CD14-positive monocyte (primary cell): ENCODE measurements at regions of chr12 and their contacts with region 1.

Region 1: DNA sequence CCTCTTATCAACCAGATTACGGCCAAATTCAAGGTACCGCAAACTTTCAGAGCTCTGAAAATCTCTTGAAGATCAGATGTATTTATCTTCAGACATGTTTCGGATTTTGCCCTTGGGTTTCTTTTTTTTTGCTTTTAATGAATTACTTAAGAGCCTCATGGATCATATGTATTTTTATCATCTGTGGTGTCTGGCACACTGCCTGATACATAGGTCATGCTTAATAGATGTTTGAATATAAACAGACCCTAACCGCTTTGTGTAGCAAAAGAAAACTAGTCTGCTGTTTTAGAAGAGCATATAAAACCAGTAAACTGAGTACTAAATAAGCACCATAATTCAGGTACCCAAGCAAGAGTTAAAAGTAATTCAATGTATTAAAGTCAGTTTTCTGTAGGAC is 20.1 kb upstream of the TBK1 start:
- DNase-seq: no peak
- H3K4me3 ChIP-seq: no peak overlapping the region
- H3K4me3 Mint-ChIP-seq: no peak overlapping the region
- H3K27ac ChIP-seq: no peak overlapping the region
- H3K27ac Mint-ChIP-seq: no peak overlapping the region
- H3K4me1 ChIP-seq: no peaks in the 10 kb centered on the region
- H3K4me1 Mint-ChIP-seq: no peaks in the 10 kb centered on the region
- H3K27me3 ChIP-seq: no peaks in the 10 kb centered on the region
- H3K27me3 Mint-ChIP-seq: no peaks in the 10 kb centered on the region
- CTCF ChIP-seq: no peak

Region 2: GRCh38 chr12:64373193-64373592 is 58.6 kb before region 1 on chr12:
- intact Hi-C with region 1: no loop called
- DNase-seq: no peak
- H3K4me3 ChIP-seq: no peak overlapping the region
- H3K4me3 Mint-ChIP-seq: no peak overlapping the region
- H3K27ac ChIP-seq: no peak overlapping the region
- H3K27ac Mint-ChIP-seq: no peak overlapping the region
- H3K4me1 ChIP-seq: no peaks in the 10 kb centered on the region
- H3K4me1 Mint-ChIP-seq: no peaks in the 10 kb centered on the region
- H3K27me3 ChIP-seq: no peaks in the 10 kb centered on the region
- H3K27me3 Mint-ChIP-seq: peaks cover 2 to 3% (median 2%) of the 10 kb centered on the region in 3 donors
- CTCF ChIP-seq: no peak

Region 3: GRCh38 chr12:64459394-64459891 is 27.7 kb after region 1 on chr12:
- intact Hi-C with region 1: no loop called
- DNase-seq: peak in 2 of 3 donors; percentile 10 to 11
- H3K4me3 ChIP-seq: peak overlapping the region; percentile 13 to 65 (median 43)
- H3K4me3 Mint-ChIP-seq: peak overlapping the region; percentile 62 to 69
- H3K27ac ChIP-seq: peak overlapping the region; percentile 45 to 76
- H3K27ac Mint-ChIP-seq: peak overlapping the region; percentile 80 to 95 (median 89)
- H3K4me1 ChIP-seq: peaks cover 14% of the 10 kb centered on the region in 2 donors
- H3K4me1 Mint-ChIP-seq: peaks cover 23% of the 10 kb centered on the region
- H3K27me3 ChIP-seq: no peaks in the 10 kb centered on the region
- H3K27me3 Mint-ChIP-seq: peaks cover 0 to 2% (median 0%) of the 10 kb centered on the region in 3 donors
- CTCF ChIP-seq: no peak

Region 4: GRCh38 chr12:64469455-64470142 is 37.8 kb after region 1 on chr12:
- intact Hi-C with region 1: no loop called
- DNase-seq: no peak
- H3K4me3 ChIP-seq: no peak overlapping the region
- H3K4me3 Mint-ChIP-seq: no peak overlapping the region
- H3K27ac ChIP-seq: no peak overlapping the region
- H3K27ac Mint-ChIP-seq: peak overlapping the region in 1 of 7 donors; percentile 72
- H3K4me1 ChIP-seq: no peaks in the 10 kb centered on the region
- H3K4me1 Mint-ChIP-seq: no peaks in the 10 kb centered on the region
- H3K27me3 ChIP-seq: no peaks in the 10 kb centered on the region
- H3K27me3 Mint-ChIP-seq: no peaks in the 10 kb centered on the region
- CTCF ChIP-seq: no peak

Region 5: DNA sequence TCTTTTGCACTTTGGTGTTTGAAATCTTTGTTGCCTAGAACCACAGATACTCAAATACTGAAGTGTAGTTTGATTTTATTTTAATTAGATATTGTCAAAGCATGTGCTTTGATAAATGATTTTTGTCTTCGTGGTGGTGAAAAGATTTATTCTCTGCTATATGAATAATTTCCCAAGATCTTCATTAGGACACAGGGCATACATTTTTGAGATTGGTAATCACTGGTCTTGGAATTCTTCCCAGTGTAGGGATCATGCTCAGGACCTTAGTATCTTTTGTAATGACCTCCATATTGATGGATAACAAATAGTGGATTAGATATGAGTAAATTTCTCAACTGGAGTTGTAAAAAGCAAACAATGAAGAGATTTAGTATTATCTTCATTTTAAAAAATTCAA is 48.4 kb after region 1 on chr12:
- intact Hi-C with region 1: loop called in 1 of 2 experiments (anchors 10 kb)
- DNase-seq: no peak
- H3K4me3 ChIP-seq: no peak overlapping the region
- H3K4me3 Mint-ChIP-seq: no peak overlapping the region
- H3K27ac ChIP-seq: no peak overlapping the region
- H3K27ac Mint-ChIP-seq: no peak overlapping the region
- H3K4me1 ChIP-seq: no peaks in the 10 kb centered on the region
- H3K4me1 Mint-ChIP-seq: no peaks in the 10 kb centered on the region
- H3K27me3 ChIP-seq: no peaks in the 10 kb centered on the region
- H3K27me3 Mint-ChIP-seq: no peaks in the 10 kb centered on the region
- CTCF ChIP-seq: no peak

Region 6: DNA sequence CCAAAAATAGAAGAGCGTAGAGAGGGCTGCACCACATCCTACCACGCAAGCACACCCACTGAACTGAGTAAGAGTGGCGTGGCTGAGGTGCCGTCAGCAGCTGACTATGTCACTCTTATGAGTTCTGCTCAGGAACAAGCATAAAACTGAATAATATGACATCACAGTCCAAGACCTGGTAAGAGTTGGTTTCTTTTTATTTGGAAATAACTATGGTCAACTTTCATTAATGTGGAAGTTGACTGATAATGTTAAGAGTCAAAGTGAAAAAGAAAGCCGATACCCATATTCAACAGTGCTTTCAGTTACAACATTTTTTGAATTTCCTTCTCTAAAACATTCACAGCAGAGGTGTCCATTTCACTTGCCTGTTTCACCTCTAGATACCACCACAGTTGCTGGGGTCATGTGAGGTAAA is 282.8 kb after region 1 on chr12:
- intact Hi-C with region 1: no loop called
- DNase-seq: peak; percentile 80 to 90 (median 83)
- H3K4me3 ChIP-seq: peak overlapping the region in 1 of 3 experiments; percentile 33
- H3K4me3 Mint-ChIP-seq: peak overlapping the region in 1 of 2 donors; percentile 35
- H3K27ac ChIP-seq: peak overlapping the region; percentile 72 to 88
- H3K27ac Mint-ChIP-seq: peak overlapping the region; percentile 85 to 95 (median 91)
- H3K4me1 ChIP-seq: peaks cover 44 to 47% of the 10 kb centered on the region in 2 donors
- H3K4me1 Mint-ChIP-seq: peaks cover 46% of the 10 kb centered on the region
- H3K27me3 ChIP-seq: no peaks in the 10 kb centered on the region
- H3K27me3 Mint-ChIP-seq: no peaks in the 10 kb centered on the region
- CTCF ChIP-seq: no peak